Psoas muscle (tissue), 8 donors: ENCODE measurements at regions of chr18 and their contacts with region 1.

Region 1: GRCh38 chr18:29874519-29875098 is 1167.9 kb downstream of the DSC3 start:
- DNase-seq: no peak
- ATAC-seq: no peak
- H3K4me3 ChIP-seq: no peak overlapping the region
- H3K27ac ChIP-seq: no peak overlapping the region
- H3K4me1 ChIP-seq: no peaks in the 10 kb centered on the region
- H3K27me3 ChIP-seq: no peaks in the 10 kb centered on the region
- CTCF ChIP-seq: peak; percentile 15

Region 2: GRCh38 chr18:30277676-30278075 is 403.1 kb after region 1 on chr18:
- intact Hi-C with region 1: loop called in 1 of 2 experiments (anchors 5 kb)
- DNase-seq: no peak
- ATAC-seq: no peak
- H3K4me3 ChIP-seq: no peak overlapping the region
- H3K27ac ChIP-seq: no peak overlapping the region
- H3K4me1 ChIP-seq: no peaks in the 10 kb centered on the region
- H3K27me3 ChIP-seq: no peaks in the 10 kb centered on the region
- CTCF ChIP-seq: no peak

Region 3: GRCh38 chr18:30967701-30968100 is 1093.1 kb after region 1 on chr18:
- intact Hi-C with region 1: loop called in 1 of 2 experiments (anchors 10 kb)
- DNase-seq: no peak
- ATAC-seq: no peak
- H3K4me3 ChIP-seq: no peak overlapping the region
- H3K27ac ChIP-seq: no peak overlapping the region
- H3K4me1 ChIP-seq: no peaks in the 10 kb centered on the region
- H3K27me3 ChIP-seq: no peaks in the 10 kb centered on the region
- CTCF ChIP-seq: no peak